ENCODE measurements at regions of chr9 and their contacts with region 1.

Region 1: DNA sequence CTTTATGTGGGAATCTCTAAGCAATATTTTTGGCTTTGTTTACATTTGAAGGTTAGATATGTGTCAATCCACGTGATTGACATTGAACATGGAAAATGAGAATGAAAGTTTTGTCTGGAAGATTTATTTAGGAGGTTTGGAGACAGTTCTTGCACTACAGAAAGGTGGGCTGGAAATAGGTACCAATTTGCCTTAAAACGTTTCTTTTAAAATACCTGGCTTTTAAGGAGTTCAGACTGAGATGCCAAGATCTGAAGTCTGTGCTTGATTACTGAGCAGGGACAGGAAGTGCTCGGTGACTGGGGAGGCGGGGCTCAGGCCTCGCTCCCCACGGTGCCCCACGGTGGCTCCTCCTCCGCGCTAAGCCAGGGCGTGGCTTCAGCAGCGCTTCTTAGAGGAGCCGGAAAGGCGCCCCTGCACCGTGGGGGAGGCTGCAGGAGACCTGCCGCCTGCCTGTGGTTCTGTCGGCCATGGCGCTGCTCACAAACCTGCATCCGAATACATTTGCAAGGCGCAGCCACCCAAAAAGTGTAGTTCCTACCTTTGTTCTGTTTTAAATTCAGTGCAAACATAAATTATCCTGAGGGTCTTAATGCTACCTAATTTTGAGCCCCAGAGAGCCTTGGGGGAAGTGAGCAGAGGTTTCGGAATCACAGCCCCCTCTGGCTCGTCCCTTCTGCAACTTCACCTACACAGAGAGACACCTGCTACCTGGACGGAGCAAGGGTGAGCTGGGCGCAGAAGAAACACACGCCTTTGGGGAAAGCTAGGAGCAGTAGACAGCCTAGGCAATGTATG is 49.2 kb downstream of the USP20 start:
- DNase-seq: peak; percentile 91
- H3K4me3 ChIP-seq: peak overlapping the region; percentile 56
- H3K27ac ChIP-seq: 0 out of 2 replicates have a peak overlapping the region, but pooled peaks have one; percentile 6
- H3K4me1 ChIP-seq: peaks cover 31% of the 10 kb centered on the region
- H3K27me3 ChIP-seq: no peaks in the 10 kb centered on the region

Region 2: DNA sequence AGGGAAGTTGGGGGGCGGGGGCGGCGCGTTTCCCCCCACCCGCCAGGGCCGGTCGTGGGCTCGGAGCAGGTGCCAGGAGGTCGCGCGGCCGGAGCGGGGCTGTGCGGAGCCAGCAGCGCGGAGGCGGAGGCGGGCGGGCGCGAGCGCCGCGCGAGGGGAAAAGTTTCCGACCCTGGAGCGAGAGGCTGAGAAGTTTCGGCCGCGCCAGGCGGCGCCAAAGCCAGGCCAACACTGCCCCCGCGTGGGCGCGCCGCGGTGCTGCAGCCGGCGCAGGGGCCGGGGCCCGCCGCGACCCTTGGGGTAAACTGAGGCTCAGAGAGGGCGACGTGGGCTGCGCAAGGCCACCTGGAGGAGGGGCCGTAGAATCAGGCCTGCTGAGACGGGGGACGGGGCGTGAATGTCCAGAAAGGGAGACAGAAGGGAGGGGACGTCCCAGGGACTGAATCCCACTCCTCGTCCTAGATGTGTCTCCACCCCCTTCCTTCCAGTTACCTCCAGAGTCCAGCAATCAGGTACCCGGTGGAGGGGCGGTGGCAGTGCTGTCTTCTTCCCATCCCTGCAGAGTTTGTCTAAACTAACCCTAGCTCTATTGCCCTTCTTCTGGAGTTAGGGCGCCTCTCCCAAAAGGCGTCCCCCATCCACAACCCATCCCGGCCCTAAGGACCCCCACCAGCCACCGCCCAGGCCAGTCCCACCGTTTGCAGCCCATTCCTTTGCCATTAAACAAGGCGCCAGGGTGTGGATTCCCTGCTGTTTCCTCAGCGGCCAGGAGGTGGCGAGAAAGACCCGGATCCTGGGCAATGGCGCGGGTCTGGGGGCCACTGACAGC is 273.7 kb before region 1 on chr9:
- in situ Hi-C with region 1: no loop called
- DNase-seq: peak; percentile 91
- H3K4me3 ChIP-seq: peak overlapping the region; percentile 85
- H3K27ac ChIP-seq: peak overlapping the region; percentile 63
- H3K4me1 ChIP-seq: peaks cover 17% of the 10 kb centered on the region
- H3K27me3 ChIP-seq: no peaks in the 10 kb centered on the region

Region 3: DNA sequence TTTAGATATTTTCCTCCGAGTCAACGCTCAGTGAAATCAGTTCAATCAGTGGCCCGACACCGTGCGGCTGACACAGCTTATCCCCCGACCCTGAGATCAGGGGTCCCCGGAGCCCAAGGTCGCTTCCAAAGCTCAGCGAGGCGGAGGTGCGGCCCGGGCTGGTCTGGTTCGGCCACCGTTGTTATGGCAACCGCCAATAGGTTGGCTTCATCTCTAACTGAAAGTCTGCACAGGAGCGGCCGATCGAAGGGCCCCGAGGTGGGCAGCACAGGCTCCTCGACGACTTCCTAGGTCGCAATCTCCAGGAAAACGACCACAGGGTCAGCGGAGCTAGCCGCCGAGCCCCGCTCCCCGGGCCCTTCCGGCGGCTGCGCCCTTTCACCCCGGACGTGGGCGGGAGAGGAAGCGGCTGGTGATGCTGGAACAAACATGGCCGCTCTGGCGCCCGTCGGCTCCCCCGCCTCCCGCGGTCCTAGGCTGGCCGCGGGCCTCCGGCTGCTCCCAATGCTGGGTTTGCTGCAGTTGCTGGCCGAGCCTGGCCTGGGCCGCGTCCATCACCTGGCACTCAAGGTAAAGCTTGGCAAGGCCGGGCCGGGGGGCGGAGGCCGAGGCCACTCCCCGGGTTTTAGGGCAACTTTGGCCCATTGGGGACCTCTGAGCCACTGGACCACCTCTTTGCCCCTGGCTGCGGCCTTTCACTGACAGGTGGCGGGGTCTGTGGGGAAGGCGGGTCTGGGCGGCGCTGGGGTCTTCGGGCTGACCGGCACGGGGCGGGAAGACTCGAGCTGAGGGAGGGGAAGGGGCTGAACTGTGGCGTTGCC is 169.3 kb after region 1 on chr9 and contains the start of gene GPR107:
- in situ Hi-C with region 1: loop called (anchors 25 kb)
- DNase-seq: peak; percentile 94
- H3K4me3 ChIP-seq: peak within 1 kb of the TSS; percentile 97
- H3K27ac ChIP-seq: peak within 1 kb of the TSS; percentile 78
- H3K4me1 ChIP-seq: peaks cover 18% of the 10 kb centered on the region
- H3K27me3 ChIP-seq: no peaks in the 10 kb centered on the region
- total RNA-seq, gene GPR107: 18.9 and 22.9 TPM in 2 replicates

Region 4: DNA sequence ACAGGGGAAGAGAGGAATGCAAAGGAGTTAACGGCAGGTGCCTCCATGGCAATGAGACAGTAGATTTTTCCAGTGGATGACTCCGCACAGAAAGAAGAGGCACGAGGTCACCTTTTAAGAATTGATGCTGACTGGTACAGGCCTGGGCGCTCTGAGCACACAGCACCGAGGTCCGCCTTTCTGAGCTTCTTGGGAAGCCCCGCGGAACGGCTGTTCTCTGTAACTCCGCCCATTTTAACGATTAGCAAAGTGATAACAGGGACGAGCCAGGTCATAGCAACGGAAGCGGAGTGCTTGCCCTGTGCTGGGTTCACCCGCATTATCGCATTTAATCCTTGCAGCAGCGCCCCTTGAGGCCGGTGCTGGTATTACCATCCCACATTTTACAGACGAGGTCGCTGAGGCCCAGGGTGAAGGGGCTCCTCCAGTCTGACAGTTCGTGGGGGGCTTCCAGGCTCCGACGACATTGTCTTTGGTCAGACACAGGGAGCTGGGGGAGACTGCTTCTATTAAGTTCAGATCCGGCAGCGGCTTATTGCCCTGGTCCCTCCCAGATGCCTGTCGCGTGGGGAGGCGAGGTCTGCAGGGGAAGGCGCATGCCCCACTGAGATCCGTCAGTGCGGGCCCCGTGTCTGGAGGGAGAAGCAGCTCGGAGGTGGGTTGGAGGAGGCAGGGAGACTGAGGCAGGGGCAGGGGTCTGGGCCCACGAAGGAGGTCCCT is 358.8 kb after region 1 on chr9:
- in situ Hi-C with region 1: loop called (anchors 25 kb)
- DNase-seq: peak; percentile 53
- H3K4me3 ChIP-seq: peak overlapping the region; percentile 34; the same call in 1 of the 2 replicates
- H3K27ac ChIP-seq: no peak overlapping the region
- H3K4me1 ChIP-seq: no peaks in the 10 kb centered on the region
- H3K27me3 ChIP-seq: no peaks in the 10 kb centered on the region

Region 5: GRCh38 chr9:130343445-130343918 is 459.1 kb after region 1 on chr9:
- in situ Hi-C with region 1: loop called (anchors 25 kb)
- DNase-seq: peak; percentile 21
- H3K4me3 ChIP-seq: no peak overlapping the region
- H3K27ac ChIP-seq: no peak overlapping the region
- H3K4me1 ChIP-seq: no peaks in the 10 kb centered on the region
- H3K27me3 ChIP-seq: no peaks in the 10 kb centered on the region; the same call in 1 of the 2 replicates

Measured in GM23248 (cell line).